Activated T-helper 1 cell treated with anti-CD3 and anti-CD28 coated beads, Interleukin-12 subunit alpha, Interleukin-12 subunit beta, Interleukin-2, Interleukin-4 antibody, amounts not matched to agents 30 ng/mL and 10 ng/mL and 1 ng/mL, durations not matched to agents 14 hours and 24 hours and 36 hours (primary cell): ENCODE measurements at regions of chr4 and their contacts with region 1.

Region 1: DNA sequence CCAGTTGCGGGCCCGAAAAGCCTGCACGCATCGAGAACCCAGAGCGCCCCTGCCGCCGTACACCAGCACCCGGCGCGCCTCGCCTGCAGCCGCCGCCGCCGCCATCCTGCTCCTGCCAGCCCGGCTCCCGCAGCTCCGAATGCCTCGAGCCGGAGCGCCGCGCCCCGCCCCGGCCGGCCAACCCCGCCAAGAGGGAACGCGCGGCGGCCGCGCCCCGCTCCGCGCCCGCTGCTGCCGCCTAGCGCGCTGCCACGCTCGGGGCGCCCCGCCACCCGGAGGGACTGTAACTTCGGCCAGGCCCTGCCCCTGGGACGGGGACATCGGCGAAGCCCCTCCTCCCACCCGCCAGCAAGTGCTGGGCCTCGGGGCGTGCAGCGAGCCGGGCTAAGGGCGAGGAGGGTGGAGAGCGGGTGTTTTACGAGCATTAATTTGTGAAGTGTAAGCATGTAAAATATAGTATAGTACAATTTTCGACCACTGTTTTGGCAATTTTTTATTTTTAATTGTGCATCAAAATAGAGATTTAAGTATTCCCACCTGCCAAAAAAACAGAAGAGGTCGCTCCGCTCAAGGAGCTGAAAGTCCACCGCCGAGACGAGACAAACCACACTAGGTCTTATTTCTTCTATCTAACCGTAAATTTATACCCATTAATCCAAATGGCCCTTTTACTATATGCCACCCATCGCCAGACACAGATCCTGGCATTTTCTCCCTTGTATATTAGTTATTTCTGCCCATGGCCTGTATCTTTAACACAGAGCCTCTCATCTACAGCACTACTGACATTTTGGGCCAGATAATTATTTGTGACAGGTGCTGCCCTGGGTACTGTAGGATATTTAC is at the start of gene QDPR:
- DNase-seq: peak; percentile 69
- H3K4me3 Mint-ChIP-seq: peak within 1 kb of the TSS; percentile 98
- H3K27ac Mint-ChIP-seq: peak within 1 kb of the TSS; percentile 92
- H3K4me1 Mint-ChIP-seq: peaks cover 15% of the 10 kb centered on the region
- H3K27me3 Mint-ChIP-seq: peaks cover 19% of the 10 kb centered on the region
- total RNA-seq, gene QDPR: 28.7 and 29.7 TPM in 2 replicates

Region 2: GRCh38 chr4:16225863-16226815 is 1286.0 kb before region 1 on chr4 and contains the start of gene TAPT1:
- intact Hi-C with region 1: loop called (anchors 10 kb)
- DNase-seq: peak; percentile 78
- H3K4me3 Mint-ChIP-seq: peak within 1 kb of the TSS; percentile 97
- H3K27ac Mint-ChIP-seq: peak within 1 kb of the TSS; percentile 96
- H3K4me1 Mint-ChIP-seq: peaks cover 60% of the 10 kb centered on the region
- H3K27me3 Mint-ChIP-seq: no peaks in the 10 kb centered on the region
- total RNA-seq, gene TAPT1: 26.0 and 31.8 TPM in 2 replicates

Region 3: GRCh38 chr4:17576932-17577665 is 64.9 kb after region 1 on chr4 and contains the start of gene LAP3:
- intact Hi-C with region 1: loop called (anchors 1 kb)
- DNase-seq: peak; percentile 98
- H3K4me3 Mint-ChIP-seq: peak within 1 kb of the TSS; percentile 93
- H3K27ac Mint-ChIP-seq: peak within 1 kb of the TSS; percentile 94
- H3K4me1 Mint-ChIP-seq: peaks cover 38% of the 10 kb centered on the region
- H3K27me3 Mint-ChIP-seq: no peaks in the 10 kb centered on the region
- total RNA-seq, gene LAP3: 108 and 109 TPM in 2 replicates